IMR-90 (cell line): ENCODE measurements at regions of chrX and their contacts with region 1.

Region 1: DNA sequence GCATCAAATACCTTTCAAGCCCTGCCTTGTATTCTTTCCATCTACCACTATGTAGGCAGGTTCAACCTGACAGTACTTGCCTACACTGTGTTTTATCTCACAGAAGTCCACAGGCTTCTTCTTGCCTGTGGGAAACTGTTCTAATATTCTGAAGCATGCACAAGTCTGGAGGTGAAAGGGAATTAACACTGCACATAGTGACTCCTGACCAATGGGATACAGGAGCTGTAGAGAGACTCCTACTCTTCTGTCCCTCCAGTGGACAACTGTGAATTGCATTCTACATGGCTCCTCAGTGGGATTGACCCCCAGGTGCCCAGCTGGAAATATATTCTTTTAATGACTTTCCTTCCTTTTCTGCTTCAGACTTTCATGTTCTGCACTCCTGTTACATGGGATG is 8.3 kb upstream of the YIPF6 start:
- DNase-seq: peak; percentile 14
- ATAC-seq: peak; percentile 88
- H3K4me3 ChIP-seq: no peak overlapping the region
- H3K27ac ChIP-seq: no peak overlapping the region
- H3K4me1 ChIP-seq: no peaks in the 10 kb centered on the region
- H3K27me3 ChIP-seq: peaks cover 3% of the 10 kb centered on the region
- CTCF ChIP-seq: peak; percentile 37
- POLR2A ChIP-seq: no peak
- RAD21 ChIP-seq: peak; percentile 31

Region 2: DNA sequence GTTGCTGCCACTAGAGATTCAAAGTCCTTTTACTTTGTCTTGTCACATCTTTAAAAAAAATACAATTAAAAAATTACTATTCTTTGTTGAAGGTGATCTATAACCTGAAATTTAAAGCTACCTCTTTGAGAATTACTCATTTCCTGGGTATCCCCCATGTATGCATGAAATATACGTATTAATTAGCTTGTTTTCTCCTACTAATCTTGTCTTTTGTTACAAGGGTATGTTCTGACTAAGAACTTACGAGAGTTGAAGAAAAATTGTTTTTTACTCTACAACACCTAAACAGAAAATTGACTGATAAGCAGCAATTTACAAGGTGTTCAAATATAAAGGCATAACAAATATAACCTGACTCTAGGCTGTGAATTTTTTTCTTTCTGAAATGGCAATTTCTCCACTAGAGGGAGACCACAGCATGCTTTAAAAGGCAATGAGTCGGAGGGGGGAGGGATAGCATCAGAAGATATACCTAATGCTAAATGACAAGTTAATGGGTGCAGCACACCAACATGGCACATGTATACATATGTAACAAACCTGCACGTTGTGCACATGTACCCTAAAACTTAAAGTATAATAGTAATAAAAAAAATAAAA is 306.9 kb before region 1 on chrX:
- CTCF ChIA-PET with region 1: no interaction called
- POLR2A ChIA-PET with region 1: no interaction called
- dilution Hi-C with region 1: no loop called
- in situ Hi-C with region 1: no loop called
- intact Hi-C with region 1: loop called (anchors 2 kb)
- DNase-seq: peak; percentile 51
- ATAC-seq: peak; percentile 75
- H3K4me3 ChIP-seq: no peak overlapping the region
- H3K27ac ChIP-seq: no peak overlapping the region
- H3K4me1 ChIP-seq: peaks cover 2% of the 10 kb centered on the region; the same call in 1 of the 2 replicates
- H3K27me3 ChIP-seq: no peaks in the 10 kb centered on the region; the same call in 1 of the 2 replicates
- CTCF ChIP-seq: peak; percentile 55
- POLR2A ChIP-seq: no peak
- RAD21 ChIP-seq: peak; percentile 55